ENCODE measurements at regions of chr1 and their contacts with region 1.

Region 1: GRCh38 chr1:26064591-26064990 is 2.8 kb downstream of the TRIM63 start:
- DNase-seq: no peak
- ATAC-seq: no peak

Region 2: GRCh38 chr1:26203642-26204318 is 139.2 kb after region 1 on chr1:
- intact Hi-C with region 1: no loop called
- DNase-seq: no peak
- ATAC-seq: no peak

Region 3: GRCh38 chr1:26387447-26387846 is 322.9 kb after region 1 on chr1:
- intact Hi-C with region 1: loop called in 1 of 2 experiments (anchors 5 kb)
- DNase-seq: no peak
- ATAC-seq: peak; percentile 84